ENCODE measurements at regions of chr7 and their contacts with region 1.

Region 1: DNA sequence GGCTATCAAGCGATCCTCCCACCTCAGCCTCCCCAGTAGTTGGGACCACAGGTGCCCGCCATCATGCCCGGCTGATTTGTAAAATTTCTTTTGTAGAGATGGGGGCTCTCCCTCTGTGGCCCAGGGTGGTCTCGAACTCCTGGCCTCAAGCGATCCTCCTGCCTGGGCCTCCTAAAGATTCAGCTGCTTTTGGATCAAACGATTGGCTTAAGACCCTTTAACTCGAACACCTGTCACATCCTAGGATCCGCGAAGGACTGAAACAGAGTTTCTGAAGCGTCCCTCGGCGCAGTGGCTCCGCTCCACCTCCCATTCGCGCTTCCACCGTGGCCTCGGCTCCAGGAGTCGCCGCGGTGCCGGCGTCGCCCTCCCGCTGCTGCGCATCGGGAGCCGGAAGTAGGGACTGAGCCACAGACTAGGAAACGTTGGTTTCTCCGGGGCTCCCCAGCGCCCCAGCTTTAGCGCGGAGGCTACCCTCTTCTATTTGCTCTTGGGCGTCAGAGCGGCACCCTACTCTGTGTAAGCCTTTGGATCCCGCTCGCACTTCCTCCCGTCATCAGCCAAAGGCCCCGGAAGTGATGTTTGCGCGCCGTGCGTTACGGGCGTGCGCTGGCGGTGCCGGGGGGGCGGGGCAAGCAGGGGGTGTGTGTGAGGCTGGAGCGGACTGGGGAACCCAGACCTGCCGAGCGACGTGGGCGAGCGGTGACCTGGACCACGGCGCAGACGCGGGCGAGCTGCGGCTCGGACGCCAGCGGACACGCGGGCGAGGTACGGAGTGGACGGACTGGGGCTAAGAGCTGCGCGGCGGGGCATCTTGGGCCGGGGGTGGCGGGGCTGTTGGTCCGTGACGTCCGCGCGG is 53.0 kb downstream of the KCTD7 start:
- DNase-seq: peak; percentile 76
- ATAC-seq: peak; percentile 97
- H3K4me3 ChIP-seq: peak overlapping the region; percentile 71 to 91
- H3K27ac ChIP-seq: peak overlapping the region; percentile 90
- H3K4me1 ChIP-seq: peaks cover 17% of the 10 kb centered on the region
- H3K27me3 ChIP-seq: no peaks in the 10 kb centered on the region
- CTCF ChIP-seq: no peak

Region 2: GRCh38 chr7:66664650-66665293 is 16.9 kb before region 1 on chr7:
- CTCF ChIA-PET with region 1: no interaction called
- POLR2A ChIA-PET with region 1: interaction called, 11 read pairs
- in situ Hi-C with region 1: no loop called
- intact Hi-C with region 1: no loop called
- DNase-seq: no peak
- ATAC-seq: no peak
- H3K4me3 ChIP-seq: no peak overlapping the region
- H3K27ac ChIP-seq: no peak overlapping the region
- H3K4me1 ChIP-seq: no peaks in the 10 kb centered on the region; the same call in 1 of the 2 replicates
- H3K27me3 ChIP-seq: no peaks in the 10 kb centered on the region
- CTCF ChIP-seq: no peak

Region 3: GRCh38 chr7:66696774-66697191 is 15.1 kb after region 1 on chr7:
- CTCF ChIA-PET with region 1: no interaction called
- POLR2A ChIA-PET with region 1: interaction called, 10 read pairs
- in situ Hi-C with region 1: no loop called
- intact Hi-C with region 1: no loop called
- DNase-seq: no peak
- ATAC-seq: 0 out of 2 replicates have a peak, but pooled peaks have one; percentile 10
- H3K4me3 ChIP-seq: no peak overlapping the region
- H3K27ac ChIP-seq: no peak overlapping the region
- H3K4me1 ChIP-seq: no peaks in the 10 kb centered on the region
- H3K27me3 ChIP-seq: no peaks in the 10 kb centered on the region
- CTCF ChIP-seq: no peak

Region 4: DNA sequence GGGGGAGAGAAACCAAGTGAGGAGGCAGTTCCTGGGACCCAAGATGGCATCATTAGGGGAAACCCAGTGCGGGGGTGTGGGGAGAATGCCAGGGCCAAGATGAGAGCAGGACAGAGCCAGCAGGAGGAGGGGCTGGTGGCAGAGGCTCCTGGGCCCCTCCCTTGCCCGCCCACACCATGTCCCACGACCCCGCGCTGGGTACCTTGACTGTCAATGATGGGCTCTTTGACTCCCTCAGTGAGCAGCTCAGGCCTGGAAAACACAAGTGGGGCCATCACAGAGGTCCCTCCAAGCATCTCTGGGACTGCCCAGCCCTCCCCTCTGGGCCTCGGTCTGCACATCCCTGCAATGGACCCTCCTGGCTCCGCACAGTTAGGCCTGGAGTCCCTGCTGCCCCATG is 134.2 kb after region 1 on chr7:
- CTCF ChIA-PET with region 1: no interaction called
- POLR2A ChIA-PET with region 1: interaction called, 13 read pairs
- in situ Hi-C with region 1: no loop called
- intact Hi-C with region 1: no loop called
- DNase-seq: no peak
- ATAC-seq: peak; percentile 29; the same call in 1 of the 2 replicates
- H3K4me3 ChIP-seq: no peak overlapping the region
- H3K27ac ChIP-seq: no peak overlapping the region
- H3K4me1 ChIP-seq: no peaks in the 10 kb centered on the region
- H3K27me3 ChIP-seq: no peaks in the 10 kb centered on the region
- CTCF ChIP-seq: no peak